Heart left ventricle (tissue), 16 donors: ENCODE measurements at regions of chr12 and their contacts with region 1.

Region 1: DNA sequence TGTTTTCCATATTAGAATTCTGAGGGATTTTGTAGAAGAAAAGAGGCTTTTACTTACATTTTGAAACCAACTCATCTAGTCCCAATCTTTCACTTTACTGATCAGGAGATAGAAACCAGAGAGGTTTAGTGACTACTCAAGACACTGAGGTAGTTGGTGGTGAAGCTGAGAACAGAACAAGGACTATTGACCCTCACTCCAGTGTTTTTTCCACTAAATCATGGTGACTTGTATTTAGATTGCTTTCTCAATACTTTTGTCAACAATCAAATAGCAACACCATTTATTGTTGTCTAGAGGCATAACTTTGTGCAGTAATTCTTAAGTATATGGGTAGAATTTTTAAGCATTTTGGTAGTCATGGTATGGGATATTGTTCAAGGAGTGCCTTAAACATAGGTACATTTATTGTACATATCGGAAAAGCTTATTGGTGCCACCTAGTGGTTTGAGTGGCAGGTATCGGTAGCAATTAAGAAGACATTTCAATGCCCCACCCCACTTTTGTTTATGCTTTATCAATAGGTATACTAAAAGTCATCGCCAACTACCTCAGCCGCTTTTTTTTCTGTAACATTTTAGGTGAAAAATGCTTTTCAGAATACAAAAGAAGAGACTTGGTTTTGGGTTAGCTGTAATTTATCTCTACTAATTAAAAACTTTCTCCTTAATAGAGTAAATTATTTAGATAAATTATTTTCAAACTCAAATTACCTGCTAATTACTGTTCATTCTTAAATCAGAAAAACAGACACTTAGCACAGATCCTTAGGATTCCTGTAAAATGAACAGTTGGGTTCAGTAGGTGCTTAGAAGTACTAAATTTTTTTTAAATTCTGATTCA is 47.3 kb upstream of the PAWR start:
- DNase-seq: no peak
- ATAC-seq: no peak
- H3K4me3 ChIP-seq: no peak overlapping the region
- H3K27ac ChIP-seq: no peak overlapping the region
- H3K4me1 ChIP-seq: peaks cover 0 to 3% (median 0%) of the 10 kb centered on the region in 12 donors
- H3K27me3 ChIP-seq: no peaks in the 10 kb centered on the region
- CTCF ChIP-seq: peak; percentile 46 to 73 (median 64)
- POLR2A ChIP-seq: no peak

Region 2: GRCh38 chr12:79407671-79408622 is 330.1 kb before region 1 on chr12:
- intact Hi-C with region 1: loop called in 3 of 10 experiments (anchors 10 kb)
- DNase-seq: peak in 4 of 5 donors; percentile 21 to 33 (median 28)
- ATAC-seq: peak; percentile 48 to 74 (median 67)
- H3K4me3 ChIP-seq: no peak overlapping the region
- H3K27ac ChIP-seq: no peak overlapping the region
- H3K4me1 ChIP-seq: no peaks in the 10 kb centered on the region
- H3K27me3 ChIP-seq: no peaks in the 10 kb centered on the region
- CTCF ChIP-seq: peak; percentile 27 to 71 (median 50)
- POLR2A ChIP-seq: no peak

Region 3: GRCh38 chr12:79420146-79420618 is 317.9 kb before region 1 on chr12:
- intact Hi-C with region 1: loop called in 2 of 10 experiments (anchors 10 kb)
- DNase-seq: no peak
- ATAC-seq: no peak
- H3K4me3 ChIP-seq: no peak overlapping the region
- H3K27ac ChIP-seq: no peak overlapping the region
- H3K4me1 ChIP-seq: peaks cover 0 to 7% (median 0%) of the 10 kb centered on the region in 12 donors
- H3K27me3 ChIP-seq: no peaks in the 10 kb centered on the region
- CTCF ChIP-seq: peak in 7 of 12 donors; percentile 6 to 52 (median 22)
- POLR2A ChIP-seq: no peak

Region 4: DNA sequence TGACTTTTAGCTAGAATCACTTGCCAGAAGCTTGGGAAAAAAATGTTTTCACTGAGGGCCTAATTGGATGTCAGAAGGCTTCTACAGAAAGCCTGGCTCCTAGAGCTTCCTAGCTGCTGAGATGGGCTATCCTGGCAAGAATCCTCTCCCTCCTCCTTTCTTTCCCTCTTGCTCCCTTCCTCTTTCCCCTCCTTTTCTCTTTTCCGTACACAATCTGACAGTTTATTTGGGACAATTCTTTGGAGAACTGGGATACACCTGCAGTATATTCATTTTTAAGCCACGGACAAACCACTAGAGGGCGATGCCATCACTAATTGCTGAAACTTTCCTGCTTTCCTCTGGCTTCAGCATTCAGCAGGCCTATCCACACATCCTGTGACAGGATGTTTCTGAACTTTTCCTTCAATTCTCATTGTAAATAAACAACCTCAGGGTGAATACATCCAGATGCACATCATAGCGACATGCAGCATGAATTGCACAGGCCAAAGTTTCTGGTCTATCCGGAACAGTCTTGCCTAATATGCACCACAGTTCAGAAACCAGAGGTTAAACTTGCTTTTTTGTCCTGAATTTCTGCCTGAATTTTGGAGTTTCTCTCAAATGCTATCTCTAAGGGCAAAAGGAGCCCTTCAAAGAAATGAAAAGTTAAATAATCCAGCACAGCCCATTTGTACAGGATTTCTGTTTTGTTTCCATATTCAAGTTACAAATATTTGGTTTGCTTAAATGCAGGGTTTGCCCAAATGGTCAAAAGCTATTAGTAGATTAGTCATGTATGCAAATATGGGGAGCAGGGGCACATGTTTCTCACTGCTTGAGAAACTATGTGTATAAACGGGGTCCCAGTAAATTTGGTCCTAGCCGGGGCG is 190.1 kb before region 1 on chr12:
- intact Hi-C with region 1: loop called in 2 of 10 experiments (anchors 2 to 5 kb)
- DNase-seq: peak in 1 of 5 donors; percentile 34
- ATAC-seq: peak in 3 of 4 donors; percentile 59 to 75 (median 73)
- H3K4me3 ChIP-seq: no peak overlapping the region
- H3K27ac ChIP-seq: peak overlapping the region in 4 of 12 donors; percentile 2 to 8 (median 6)
- H3K4me1 ChIP-seq: peaks cover 0 to 22% (median 6%) of the 10 kb centered on the region in 12 donors
- H3K27me3 ChIP-seq: no peaks in the 10 kb centered on the region
- CTCF ChIP-seq: peak; percentile 52 to 81 (median 65)
- POLR2A ChIP-seq: no peak

Region 5: GRCh38 chr12:79555028-79555930 is 182.8 kb before region 1 on chr12:
- intact Hi-C with region 1: loop called in 9 of 10 experiments (anchors 1 to 5 kb)
- DNase-seq: no peak
- ATAC-seq: peak in 1 of 4 donors; percentile 45
- H3K4me3 ChIP-seq: no peak overlapping the region
- H3K27ac ChIP-seq: peak overlapping the region in 1 of 12 donors; percentile 38
- H3K4me1 ChIP-seq: peaks cover 0 to 45% (median 7%) of the 10 kb centered on the region in 12 donors
- H3K27me3 ChIP-seq: no peaks in the 10 kb centered on the region
- CTCF ChIP-seq: peak; percentile 31 to 80 (median 62)
- POLR2A ChIP-seq: no peak

Region 6: DNA sequence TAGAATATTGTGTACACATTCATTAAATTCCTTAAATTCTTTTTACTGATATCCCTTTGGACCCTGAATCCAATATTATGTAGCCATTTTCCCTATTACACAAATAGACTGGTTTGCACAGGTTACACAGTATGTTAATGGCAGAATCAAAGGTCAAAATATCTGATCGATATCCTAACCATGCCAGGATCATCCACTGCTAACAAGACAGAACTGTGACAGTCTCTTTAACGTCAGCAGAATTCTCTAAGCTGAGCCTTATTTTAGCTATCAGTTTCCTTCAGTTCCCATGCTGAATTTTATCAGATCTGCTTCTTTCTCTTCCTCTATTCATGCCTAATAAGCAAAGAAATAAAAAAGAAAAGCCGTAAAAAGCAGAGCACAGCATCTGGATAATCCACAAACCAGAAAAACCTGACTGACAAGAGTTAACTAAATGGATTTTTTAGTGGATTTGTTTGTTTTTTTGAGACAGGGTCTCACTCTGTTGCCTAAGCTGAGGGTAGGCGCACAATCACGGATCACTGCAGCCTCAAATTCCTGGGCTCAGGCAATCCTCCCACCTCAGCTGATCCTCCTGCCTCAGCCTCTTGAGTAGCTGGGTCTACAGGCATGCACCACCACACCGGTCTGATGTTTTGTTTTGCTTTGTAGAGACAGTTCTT is 177.7 kb before region 1 on chr12:
- intact Hi-C with region 1: loop called in 8 of 10 experiments (anchors 1 to 5 kb)
- DNase-seq: no peak
- ATAC-seq: no peak
- H3K4me3 ChIP-seq: no peak overlapping the region
- H3K27ac ChIP-seq: peak overlapping the region in 3 of 12 donors; percentile 29 to 61 (median 35)
- H3K4me1 ChIP-seq: peaks cover 0 to 41% (median 7%) of the 10 kb centered on the region in 12 donors
- H3K27me3 ChIP-seq: no peaks in the 10 kb centered on the region
- CTCF ChIP-seq: no peak
- POLR2A ChIP-seq: no peak